Heart right ventricle (tissue), 16 donors: ENCODE measurements at regions of chr7 and their contacts with region 1.

Region 1: DNA sequence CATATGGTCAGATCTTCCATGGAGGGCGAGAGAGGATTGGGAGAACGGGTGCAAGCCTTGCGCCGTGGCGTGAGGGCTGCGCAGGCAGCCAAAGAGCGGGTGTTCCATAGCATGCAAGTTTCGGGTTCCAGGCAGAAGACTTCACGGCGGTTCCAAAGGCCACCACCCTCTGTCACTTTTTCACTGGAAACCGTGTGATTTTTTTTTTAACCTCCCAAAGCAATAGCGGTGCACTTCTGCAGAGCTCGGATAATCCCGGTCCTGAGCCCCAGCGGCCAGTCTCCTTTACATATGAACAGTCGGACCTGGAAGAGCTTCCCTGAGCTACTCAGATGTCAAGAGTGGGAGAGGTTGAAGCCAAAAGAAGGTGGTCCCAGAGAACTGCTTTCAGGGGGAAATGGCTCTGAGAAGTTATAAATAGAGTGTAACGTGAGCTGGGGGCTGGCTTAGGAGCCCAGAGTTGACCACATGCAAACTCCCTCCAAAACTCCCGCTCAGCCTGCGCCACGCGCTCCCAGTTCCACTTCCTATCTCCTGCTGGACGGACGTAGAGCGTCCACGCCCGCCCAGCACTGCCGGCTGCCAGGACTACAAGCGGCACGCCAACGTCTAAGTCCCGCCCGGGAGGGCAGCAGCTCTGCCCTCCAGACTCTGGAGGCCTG is at the start of gene MEOX2:
- DNase-seq: peak; percentile 86 to 91
- ATAC-seq: peak; percentile 90 to 96 (median 94)
- H3K4me3 ChIP-seq: peak within 1 kb of the TSS; percentile 62 to 79 (median 70)
- H3K27ac ChIP-seq: peak within 1 kb of the TSS; percentile 86 to 95 (median 90)
- H3K4me1 ChIP-seq: peaks cover 0 to 16% (median 0%) of the 10 kb centered on the region in 9 donors
- H3K27me3 ChIP-seq: peaks cover 0 to 60% (median 5%) of the 10 kb centered on the region in 7 donors
- CTCF ChIP-seq: no peak
- total RNA-seq, gene MEOX2: 5.2 to 13.5 (median 7.9) TPM

Region 2: DNA sequence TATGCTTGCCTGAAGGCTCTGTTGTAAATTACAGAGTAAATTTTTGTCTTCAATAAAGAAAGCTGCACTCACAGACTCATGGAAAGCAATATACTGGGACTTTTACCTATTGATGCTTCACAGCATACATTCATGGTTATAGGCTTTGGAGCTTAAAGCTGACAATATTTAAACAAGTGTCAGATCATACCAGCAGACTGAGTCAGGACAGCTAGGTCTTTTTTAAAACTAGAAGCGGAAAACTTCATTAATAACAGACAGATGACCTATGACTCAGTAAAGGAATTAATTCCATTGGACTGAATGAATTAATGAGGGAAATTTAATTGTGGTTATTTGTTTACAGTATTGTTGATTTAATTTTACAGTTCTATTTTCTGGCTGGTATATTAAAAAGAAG is 618.1 kb before region 1 on chr7:
- intact Hi-C with region 1: no loop called
- DNase-seq: no peak
- ATAC-seq: no peak
- H3K4me3 ChIP-seq: no peak overlapping the region
- H3K27ac ChIP-seq: no peak overlapping the region
- H3K4me1 ChIP-seq: no peaks in the 10 kb centered on the region
- H3K27me3 ChIP-seq: no peaks in the 10 kb centered on the region
- CTCF ChIP-seq: no peak

Region 3: GRCh38 chr7:15461576-15461975 is 224.8 kb before region 1 on chr7:
- intact Hi-C with region 1: loop called in 1 of 10 experiments (anchors 5 kb)
- DNase-seq: no peak
- ATAC-seq: peak in 1 of 8 donors; percentile 62
- H3K4me3 ChIP-seq: no peak overlapping the region
- H3K27ac ChIP-seq: peak overlapping the region in 7 of 10 donors; percentile 25 to 80 (median 50)
- H3K4me1 ChIP-seq: peaks cover 2 to 70% (median 27%) of the 10 kb centered on the region in 9 donors
- H3K27me3 ChIP-seq: no peaks in the 10 kb centered on the region
- CTCF ChIP-seq: no peak

Region 4: GRCh38 chr7:15720849-15721471 is 34.5 kb after region 1 on chr7:
- intact Hi-C with region 1: loop called in 2 of 10 experiments (anchors 5 kb)
- DNase-seq: peak in 1 of 2 donors; percentile 52
- ATAC-seq: no peak
- H3K4me3 ChIP-seq: no peak overlapping the region
- H3K27ac ChIP-seq: peak overlapping the region in 3 of 10 donors; percentile 5 to 34 (median 9)
- H3K4me1 ChIP-seq: peaks cover 0 to 17% (median 4%) of the 10 kb centered on the region in 9 donors
- H3K27me3 ChIP-seq: no peaks in the 10 kb centered on the region
- CTCF ChIP-seq: peak; percentile 38 to 89 (median 72)

Region 5: GRCh38 chr7:15839416-15840100 is 153.1 kb after region 1 on chr7:
- intact Hi-C with region 1: loop called in 2 of 10 experiments (anchors 5 to 10 kb)
- DNase-seq: peak; percentile 69 to 83
- ATAC-seq: peak; percentile 91 to 99 (median 98)
- H3K4me3 ChIP-seq: peak overlapping the region in 9 of 10 donors; percentile 20 to 55 (median 43)
- H3K27ac ChIP-seq: peak overlapping the region; percentile 46 to 95 (median 80)
- H3K4me1 ChIP-seq: peaks cover 0 to 43% (median 16%) of the 10 kb centered on the region in 9 donors
- H3K27me3 ChIP-seq: no peaks in the 10 kb centered on the region
- CTCF ChIP-seq: no peak

Region 6: DNA sequence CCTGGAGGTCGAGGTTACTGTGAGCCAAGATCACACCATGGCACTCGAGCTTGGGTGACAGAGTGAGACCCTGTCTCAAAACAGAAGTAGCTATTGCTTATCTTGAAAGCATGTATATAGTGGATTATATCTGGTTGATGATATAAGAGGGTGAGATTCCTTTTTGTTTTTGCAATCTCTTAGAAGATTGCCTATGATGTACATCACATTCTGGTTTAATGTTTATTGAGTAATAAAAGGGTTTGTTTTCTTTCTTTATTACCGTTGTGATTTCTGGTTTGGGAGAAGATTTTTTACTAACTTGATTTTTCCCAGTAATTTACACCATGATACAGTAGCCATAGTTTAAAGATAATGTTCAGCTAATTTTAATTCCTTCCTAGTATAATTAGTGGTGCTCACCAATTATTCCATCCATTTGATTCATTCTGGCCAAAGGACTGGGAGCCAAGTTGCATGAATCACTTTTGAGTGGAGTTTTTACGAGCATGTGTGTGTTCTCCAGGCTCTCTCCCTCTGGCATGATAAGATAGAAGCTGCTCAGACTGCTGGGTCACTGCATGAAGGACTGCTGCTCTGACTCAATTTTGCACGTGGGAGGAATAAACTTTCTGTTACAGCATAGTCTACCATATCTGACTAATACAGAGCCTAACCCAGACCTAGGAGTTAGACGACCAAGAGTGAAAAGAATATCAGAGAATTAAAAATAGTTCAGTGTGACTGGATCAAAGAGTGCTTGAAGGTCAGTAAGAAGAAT is 1053.6 kb after region 1 on chr7:
- intact Hi-C with region 1: loop called in 1 of 10 experiments (anchors 10 kb)
- DNase-seq: peak in 1 of 2 donors; percentile 66
- ATAC-seq: peak; percentile 86 to 99 (median 93)
- H3K4me3 ChIP-seq: no peak overlapping the region
- H3K27ac ChIP-seq: peak overlapping the region in 9 of 10 donors; percentile 28 to 79 (median 59)
- H3K4me1 ChIP-seq: peaks cover 2 to 52% (median 34%) of the 10 kb centered on the region in 9 donors
- H3K27me3 ChIP-seq: no peaks in the 10 kb centered on the region
- CTCF ChIP-seq: no peak